SK-N-SH (cell line): ENCODE measurements at regions of chr7 and their contacts with region 1.

Region 1: GRCh38 chr7:20661884-20662283 is 46.4 kb downstream of the ABCB5 start:
- DNase-seq: no peak
- H3K4me3 ChIP-seq: no peak overlapping the region
- H3K27ac ChIP-seq: no peak overlapping the region
- H3K4me1 ChIP-seq: no peaks in the 10 kb centered on the region
- H3K27me3 ChIP-seq: no peaks in the 10 kb centered on the region
- CTCF ChIP-seq: no peak
- EP300 ChIP-seq: no peak
- RAD21 ChIP-seq: no peak

Region 2: DNA sequence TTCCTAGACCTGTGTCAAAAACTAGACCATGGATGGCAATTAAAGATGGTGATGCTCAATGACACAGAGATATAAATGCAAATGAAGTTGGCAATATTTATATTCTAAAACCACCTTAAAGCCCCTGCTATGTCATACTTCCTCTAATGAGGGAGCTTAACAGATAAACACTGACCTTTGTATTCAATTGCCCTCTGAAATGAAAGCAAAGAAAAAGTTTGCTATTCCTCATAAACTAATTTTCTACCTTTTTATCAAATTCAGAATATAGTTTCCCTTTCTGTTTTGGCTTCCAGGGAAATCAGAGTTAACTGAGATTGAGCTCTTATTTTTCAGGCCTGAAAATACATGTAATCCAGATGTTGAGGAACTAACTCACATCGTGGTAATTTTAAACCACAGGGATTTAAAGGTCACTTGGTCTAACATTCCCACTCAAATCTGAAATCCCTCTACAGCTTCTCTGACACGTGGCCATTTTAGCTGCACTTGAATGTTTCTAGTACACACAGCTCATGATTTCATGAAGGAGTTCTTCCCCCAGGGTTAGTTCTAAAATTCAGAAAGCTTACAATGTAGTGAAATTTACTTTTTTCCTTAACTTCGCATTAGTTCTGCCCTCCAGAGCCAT is 84.3 kb before region 1 on chr7:
- CTCF ChIA-PET with region 1: no interaction called
- POLR2A ChIA-PET with region 1: no interaction called
- DNase-seq: no peak
- H3K4me3 ChIP-seq: no peak overlapping the region
- H3K27ac ChIP-seq: no peak overlapping the region
- H3K4me1 ChIP-seq: peaks cover 0 to 20% of the 10 kb centered on the region in 2 experiments; a peak in 2 of 4 replicates
- H3K27me3 ChIP-seq: no peaks in the 10 kb centered on the region
- CTCF ChIP-seq: no peak
- EP300 ChIP-seq: no peak
- RAD21 ChIP-seq: no peak

Region 3: GRCh38 chr7:20647908-20648776 is 13.7 kb before region 1 on chr7:
- CTCF ChIA-PET with region 1: interaction called, 23 read pairs
- POLR2A ChIA-PET with region 1: no interaction called
- DNase-seq: peak; percentile 51
- H3K4me3 ChIP-seq: no peak overlapping the region
- H3K27ac ChIP-seq: no peak overlapping the region
- H3K4me1 ChIP-seq: no peaks in the 10 kb centered on the region
- H3K27me3 ChIP-seq: no peaks in the 10 kb centered on the region; the same call in 1 of the 2 replicates
- CTCF ChIP-seq: peak; percentile 44; the same call in 1 of the 2 replicates
- EP300 ChIP-seq: no peak
- RAD21 ChIP-seq: peak; percentile 66

Region 4: DNA sequence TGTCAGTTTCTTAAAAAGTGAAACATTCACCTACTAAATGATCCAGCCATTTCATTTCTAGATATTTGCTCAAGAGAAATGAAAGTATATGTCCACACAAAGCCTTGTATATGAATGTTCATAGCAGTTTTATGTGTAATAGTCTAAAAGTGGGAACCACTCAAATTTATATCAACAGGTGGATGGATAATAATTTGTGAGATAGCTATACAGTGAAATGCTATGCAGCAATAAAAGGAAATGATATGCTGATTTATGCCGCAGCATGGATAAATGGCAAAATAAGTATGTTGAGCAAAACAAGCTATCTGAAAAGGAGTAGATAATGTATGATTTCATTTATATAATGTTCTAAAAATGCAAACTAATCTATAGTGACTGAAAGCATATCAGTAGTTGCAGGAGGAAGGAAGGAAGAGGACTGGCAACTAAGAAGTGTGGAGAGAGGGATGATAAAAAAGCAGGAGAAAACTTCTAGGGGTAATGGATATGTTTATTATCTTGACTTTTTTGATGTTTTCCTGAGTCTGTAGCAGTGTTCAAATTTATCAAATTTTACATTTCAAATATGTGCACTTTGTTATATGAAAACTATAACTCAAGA is 34.2 kb after region 1 on chr7:
- CTCF ChIA-PET with region 1: no interaction called
- POLR2A ChIA-PET with region 1: no interaction called
- DNase-seq: no peak
- H3K4me3 ChIP-seq: no peak overlapping the region
- H3K27ac ChIP-seq: no peak overlapping the region
- H3K4me1 ChIP-seq: no peaks in the 10 kb centered on the region
- H3K27me3 ChIP-seq: peaks cover 10% of the 10 kb centered on the region
- CTCF ChIP-seq: no peak
- EP300 ChIP-seq: no peak
- RAD21 ChIP-seq: no peak

Region 5: GRCh38 chr7:20713792-20714191 is 51.9 kb after region 1 on chr7:
- CTCF ChIA-PET with region 1: no interaction called
- POLR2A ChIA-PET with region 1: no interaction called
- DNase-seq: no peak
- H3K4me3 ChIP-seq: no peak overlapping the region
- H3K27ac ChIP-seq: no peak overlapping the region
- H3K4me1 ChIP-seq: no peaks in the 10 kb centered on the region
- H3K27me3 ChIP-seq: no peaks in the 10 kb centered on the region
- CTCF ChIP-seq: no peak
- EP300 ChIP-seq: no peak
- RAD21 ChIP-seq: no peak